HepG2 (cell line): ENCODE measurements at regions of chr19 and their contacts with region 1.

Region 1: GRCh38 chr19:35661995-35662340 is 4.3 kb upstream of the UPK1A start:
- DNase-seq: no peak
- ATAC-seq: no peak
- H3K4me3 ChIP-seq: no peak overlapping the region
- H3K27ac ChIP-seq: peak overlapping the region; percentile 66
- H3K4me1 ChIP-seq: peaks cover 25% of the 10 kb centered on the region
- H3K27me3 ChIP-seq: no peaks in the 10 kb centered on the region
- CTCF ChIP-seq: no peak
- EP300 ChIP-seq: no peak
- POLR2A ChIP-seq: no peak
- RAD21 ChIP-seq: no peak

Region 2: DNA sequence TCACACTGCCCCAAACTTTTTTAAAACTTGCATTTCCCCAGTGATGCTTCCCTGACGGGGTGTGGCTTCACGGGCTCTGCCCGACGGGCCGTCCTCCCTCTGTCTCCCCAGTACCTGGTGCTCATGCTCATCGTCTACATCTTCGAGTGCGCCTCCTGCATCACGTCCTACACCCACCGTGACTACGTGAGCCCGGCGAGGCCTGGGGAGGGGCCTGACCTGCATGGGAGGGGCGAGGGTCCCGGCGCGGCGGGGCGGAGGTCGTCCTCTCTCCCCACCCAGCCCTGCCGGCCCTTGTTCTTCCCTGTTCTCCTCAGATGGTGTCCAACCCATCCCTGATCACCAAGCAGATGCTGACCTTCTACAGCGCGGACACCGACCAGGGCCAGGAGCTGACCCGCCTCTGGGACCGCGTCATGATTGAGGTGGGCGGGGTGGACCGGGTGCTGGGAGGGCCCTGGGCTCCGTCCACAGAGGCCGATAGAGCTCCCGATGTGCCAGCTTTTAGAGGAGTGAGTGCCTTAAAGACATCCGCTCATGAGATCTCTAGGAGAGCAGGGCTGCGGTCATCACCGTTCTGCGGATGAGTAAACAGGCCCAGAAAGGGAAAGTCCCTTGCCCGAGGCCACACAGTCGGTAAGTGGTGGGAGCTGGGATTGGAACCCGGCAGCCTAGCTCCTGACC is 11.3 kb after region 1 on chr19:
- CTCF ChIA-PET with region 1: no interaction called
- POLR2A ChIA-PET with region 1: interaction called, 10 read pairs
- in situ Hi-C with region 1: no loop called
- intact Hi-C with region 1: no loop called
- DNase-seq: peak; percentile 24
- ATAC-seq: peak; percentile 89
- H3K4me3 ChIP-seq: peak overlapping the region; percentile 59 to 83 (median 62)
- H3K27ac ChIP-seq: no peak overlapping the region
- H3K4me1 ChIP-seq: peaks cover 41% of the 10 kb centered on the region
- H3K27me3 ChIP-seq: 0 out of 5 replicates have a peak, but pooled peaks cover 0 to 4% of the 10 kb centered on the region in 2 experiments
- CTCF ChIP-seq: no peak; the same call in 1 of the 2 replicates
- EP300 ChIP-seq: no peak
- POLR2A ChIP-seq: no peak; a peak in 1 of 4 replicates
- RAD21 ChIP-seq: no peak